OCI-LY7 (cell line): ENCODE measurements at regions of chr1 and their contacts with region 1.

Region 1: GRCh38 chr1:145858894-145859490 is at the start of gene PIAS3:
- DNase-seq: peak; percentile 95
- H3K4me3 ChIP-seq: peak within 1 kb of the TSS; percentile 84
- H3K27ac ChIP-seq: peak within 1 kb of the TSS; percentile 68
- H3K4me1 ChIP-seq: peaks cover 13% of the 10 kb centered on the region
- CTCF ChIP-seq: no peak
- total RNA-seq, gene PIAS3: 7.8 and 9.4 TPM in 2 replicates

Region 2: DNA sequence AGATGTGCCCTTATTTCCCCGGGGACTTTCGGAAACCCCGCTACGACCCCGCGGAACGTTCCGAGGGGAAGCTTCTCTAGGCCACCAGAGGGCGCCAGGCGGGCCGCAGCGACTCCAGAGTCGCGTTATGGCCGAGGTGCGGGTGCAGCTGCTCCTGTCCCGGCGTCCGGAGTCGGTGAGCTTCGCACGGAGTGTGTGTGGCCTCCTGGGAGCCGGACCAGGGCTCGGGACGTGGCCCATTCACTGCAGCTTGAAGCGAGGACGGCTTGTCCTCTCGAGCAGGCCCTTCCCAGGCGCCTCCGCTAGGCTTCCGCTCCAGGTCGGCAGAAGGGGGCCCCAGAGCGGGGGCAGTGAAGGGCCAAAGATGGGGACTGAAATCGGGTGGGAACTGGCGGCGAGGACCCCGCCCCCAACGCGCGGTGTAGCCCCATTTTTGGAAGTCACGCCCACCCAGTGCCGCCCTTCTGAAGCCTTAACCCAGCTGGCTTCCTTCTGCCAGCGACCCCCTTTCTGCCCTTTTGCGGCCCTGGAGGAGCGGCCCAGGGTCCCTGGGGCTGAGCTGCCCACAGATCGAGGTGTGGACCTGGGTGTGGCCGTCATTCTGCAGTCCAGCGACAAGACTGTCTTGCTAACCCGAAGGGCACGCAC is 13.4 kb before region 1 on chr1 and contains the start of gene NUDT17:
- CTCF ChIA-PET with region 1: interaction called, 44 read pairs
- POLR2A ChIA-PET with region 1: interaction called, 65 read pairs
- intact Hi-C with region 1: loop called (anchors 1 kb)
- DNase-seq: peak; percentile 91
- H3K4me3 ChIP-seq: peak within 1 kb of the TSS; percentile 72
- H3K27ac ChIP-seq: peak within 1 kb of the TSS; percentile 92
- H3K4me1 ChIP-seq: peaks cover 33% of the 10 kb centered on the region
- CTCF ChIP-seq: peak; percentile 98
- total RNA-seq, gene NUDT17: 10.8 and 16.9 TPM in 2 replicates

Region 3: GRCh38 chr1:145885738-145886287 is 26.8 kb after region 1 on chr1 and contains the start of gene ANKRD35:
- CTCF ChIA-PET with region 1: interaction called, 4 read pairs
- POLR2A ChIA-PET with region 1: interaction called, 14 read pairs
- intact Hi-C with region 1: no loop called
- DNase-seq: peak; percentile 81
- H3K4me3 ChIP-seq: peak within 1 kb of the TSS; percentile 69
- H3K27ac ChIP-seq: no peak within 1 kb of the TSS
- H3K4me1 ChIP-seq: no peaks in the 10 kb centered on the region
- CTCF ChIP-seq: no peak
- total RNA-seq, gene ANKRD35: not detected in 2 replicates

Region 4: GRCh38 chr1:145927063-145927886 is 68.3 kb after region 1 on chr1 and contains the start of gene RBM8A:
- CTCF ChIA-PET with region 1: no interaction called
- POLR2A ChIA-PET with region 1: interaction called, 18 read pairs
- intact Hi-C with region 1: no loop called
- DNase-seq: peak; percentile 99
- H3K4me3 ChIP-seq: peak within 1 kb of the TSS; percentile 92
- H3K27ac ChIP-seq: peak within 1 kb of the TSS; percentile 91
- H3K4me1 ChIP-seq: peaks cover 25% of the 10 kb centered on the region
- CTCF ChIP-seq: peak; percentile 88
- total RNA-seq, gene RBM8A: 135 and 239 TPM in 2 replicates

Region 5: DNA sequence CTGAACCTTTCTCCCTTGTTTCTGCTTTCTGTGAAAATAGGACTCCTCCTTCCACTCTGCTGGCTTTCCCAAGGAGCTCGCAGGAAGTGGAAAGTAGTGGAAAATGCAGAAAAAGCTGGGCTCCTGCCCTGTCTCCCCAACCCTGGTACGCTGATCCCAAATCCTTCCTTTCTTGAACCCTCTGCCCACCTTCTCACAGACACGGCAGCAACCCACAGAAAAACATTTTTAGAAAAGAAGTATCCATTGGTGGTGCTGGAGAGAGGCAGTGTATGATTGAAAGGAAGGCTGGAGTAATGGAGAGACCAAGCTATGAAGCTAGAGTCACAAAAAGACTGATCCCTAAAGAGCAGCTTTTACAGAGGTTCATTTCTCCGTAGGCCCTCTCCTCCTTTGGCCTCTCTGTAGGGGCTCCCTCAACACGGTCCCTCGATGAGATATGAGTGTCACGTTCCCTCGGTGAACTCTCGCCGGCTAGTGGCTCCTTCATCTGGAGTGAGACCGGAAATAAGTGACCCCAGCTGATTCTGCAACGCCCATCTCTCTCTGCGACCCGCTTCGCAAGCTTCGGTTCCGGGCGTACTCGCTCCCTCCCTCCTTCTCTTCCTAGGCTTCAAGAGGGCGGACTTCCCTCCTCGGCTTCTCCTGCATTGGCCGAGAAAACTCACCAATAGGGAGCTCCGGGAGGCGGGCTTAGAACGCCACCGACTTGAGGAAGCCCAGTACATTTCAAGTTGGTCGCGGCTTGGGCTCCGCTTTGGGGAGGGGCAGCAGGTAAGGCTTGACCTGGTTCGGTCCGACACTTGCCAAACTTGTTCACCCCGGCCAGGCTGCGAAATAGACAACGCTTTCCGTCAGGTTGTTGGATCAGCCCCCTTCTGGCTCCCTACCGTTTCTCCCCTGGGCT is 105.3 kb after region 1 on chr1 and contains the starts of genes ANKRD34A and POLR3GL:
- CTCF ChIA-PET with region 1: no interaction called
- POLR2A ChIA-PET with region 1: interaction called, 10 read pairs
- intact Hi-C with region 1: loop called (anchors 2 kb)
- DNase-seq: peak; percentile 95
- H3K4me3 ChIP-seq: peak within 1 kb of the TSS; percentile 75
- H3K27ac ChIP-seq: peak within 1 kb of the TSS; percentile 36
- H3K4me1 ChIP-seq: peaks cover 53% of the 10 kb centered on the region
- CTCF ChIP-seq: no peak
- total RNA-seq, gene ANKRD34A: 0.62 and 1.9 TPM in 2 replicates
- total RNA-seq, gene POLR3GL: 19.8 and 29.8 TPM in 2 replicates

Region 6: DNA sequence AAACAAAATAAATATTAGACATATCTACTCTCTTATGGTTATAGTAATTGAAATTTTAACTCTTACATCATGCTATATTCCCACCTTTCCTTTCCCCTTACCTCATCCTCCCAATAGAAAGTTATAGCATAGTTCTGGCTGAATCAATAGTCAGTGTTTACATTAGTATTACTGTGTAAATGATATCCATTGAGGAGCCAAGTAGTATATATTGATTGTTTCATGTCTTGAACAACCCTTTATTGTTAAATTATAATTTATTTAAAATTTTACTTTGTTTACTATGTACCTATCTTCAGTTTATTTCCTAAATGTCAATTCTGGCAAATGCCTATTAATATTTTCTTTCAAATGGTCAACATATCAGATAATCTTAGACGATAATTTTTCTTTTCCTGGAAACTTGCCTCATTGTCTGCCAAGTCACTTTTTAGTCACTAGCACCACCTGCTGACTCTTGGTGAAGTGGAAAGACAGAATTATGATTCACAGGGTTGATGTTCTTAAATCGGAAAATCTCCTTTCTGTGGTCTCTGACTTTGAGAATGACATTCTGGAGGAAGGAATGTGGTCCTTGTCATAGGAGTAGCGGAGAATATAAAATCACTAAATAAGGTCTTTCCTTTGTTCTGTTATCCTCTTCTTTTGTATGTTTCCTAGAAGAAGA is 153.9 kb after region 1 on chr1:
- CTCF ChIA-PET with region 1: no interaction called
- POLR2A ChIA-PET with region 1: no interaction called
- intact Hi-C with region 1: loop called (anchors 2 kb)
- DNase-seq: peak; percentile 76
- H3K4me3 ChIP-seq: no peak overlapping the region
- H3K27ac ChIP-seq: no peak overlapping the region
- H3K4me1 ChIP-seq: peaks cover 3% of the 10 kb centered on the region
- CTCF ChIP-seq: peak; percentile 99